CD8-positive, alpha-beta T cell (primary cell): ENCODE measurements at regions of chr16 and their contacts with region 1.

Region 1: GRCh38 chr16:66872943-66873684 is 7.2 kb upstream of the PDP2 start:
- DNase-seq: peak; percentile 68 to 96 (median 89)
- ATAC-seq: peak; percentile 84
- H3K4me3 ChIP-seq: peak overlapping the region; percentile 53 to 57
- H3K4me3 Mint-ChIP-seq: peak overlapping the region; percentile 74
- H3K27ac ChIP-seq: peak overlapping the region; percentile 11 to 68
- H3K27ac Mint-ChIP-seq: peak overlapping the region; percentile 34
- H3K4me1 ChIP-seq: peaks cover 9% of the 10 kb centered on the region
- H3K4me1 Mint-ChIP-seq: peaks cover 25% of the 10 kb centered on the region
- H3K27me3 ChIP-seq: no peaks in the 10 kb centered on the region
- H3K27me3 Mint-ChIP-seq: no peaks in the 10 kb centered on the region
- CTCF ChIP-seq: peak; percentile 92

Region 2: GRCh38 chr16:66562407-66562806 is 310.7 kb before region 1 on chr16:
- CTCF ChIA-PET with region 1: interaction called, 10 read pairs
- POLR2A ChIA-PET with region 1: no interaction called
- intact Hi-C with region 1: loop called in 1 of 2 experiments (anchors 2 kb)
- DNase-seq: peak in 2 of 9 experiments; percentile 34 to 56
- ATAC-seq: peak; percentile 64
- H3K4me3 ChIP-seq: no peak overlapping the region
- H3K4me3 Mint-ChIP-seq: no peak overlapping the region
- H3K27ac ChIP-seq: peak overlapping the region in 1 of 2 experiments; percentile 58
- H3K27ac Mint-ChIP-seq: peak overlapping the region; percentile 49
- H3K4me1 ChIP-seq: peaks cover 9% of the 10 kb centered on the region
- H3K4me1 Mint-ChIP-seq: peaks cover 60% of the 10 kb centered on the region
- H3K27me3 ChIP-seq: no peaks in the 10 kb centered on the region
- H3K27me3 Mint-ChIP-seq: no peaks in the 10 kb centered on the region
- CTCF ChIP-seq: peak; percentile 61

Region 3: DNA sequence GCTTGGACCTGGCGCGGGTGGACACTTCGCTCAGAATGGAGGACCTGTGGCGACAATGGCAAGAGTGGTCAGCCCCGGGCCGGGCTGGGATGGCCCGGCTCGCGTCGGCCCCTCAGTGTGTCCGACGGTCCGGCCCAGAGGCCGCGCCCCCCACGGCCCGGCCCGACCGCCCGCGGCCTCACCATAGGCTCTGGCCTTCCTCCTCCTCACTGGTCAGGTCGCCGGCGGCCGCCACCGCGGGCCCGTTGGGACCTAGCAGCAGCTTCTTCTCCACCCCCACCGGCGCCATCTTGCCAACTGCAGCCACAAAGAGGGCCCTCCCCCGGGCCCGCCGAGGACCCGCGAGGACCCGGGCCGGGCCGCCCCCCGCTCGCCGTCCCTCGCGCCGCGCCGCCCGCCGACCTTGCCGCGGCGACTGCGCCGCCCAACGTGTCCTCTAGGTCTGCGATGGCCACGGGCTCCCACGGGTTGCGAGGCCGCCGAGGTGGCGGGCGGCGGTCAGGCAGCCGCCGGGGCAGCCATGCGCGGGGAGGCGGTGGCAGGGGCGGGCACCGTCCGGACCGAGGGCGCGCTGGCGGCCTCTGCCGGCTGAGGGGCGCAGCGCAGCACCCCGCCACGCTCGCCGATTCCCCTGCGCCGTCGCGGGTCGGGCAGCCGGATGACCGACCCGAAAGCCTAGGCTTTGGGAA is 121.7 kb before region 1 on chr16 and contains the start of gene DYNC1LI2:
- CTCF ChIA-PET with region 1: interaction called, 4 read pairs
- POLR2A ChIA-PET with region 1: no interaction called
- intact Hi-C with region 1: loop called in 1 of 2 experiments (anchors 10 kb)
- DNase-seq: peak; percentile 63 to 90 (median 78)
- ATAC-seq: peak; percentile 96
- H3K4me3 ChIP-seq: peak within 1 kb of the TSS; percentile 70 to 90
- H3K4me3 Mint-ChIP-seq: peak within 1 kb of the TSS; percentile 87
- H3K27ac ChIP-seq: peak within 1 kb of the TSS; percentile 67 to 79
- H3K27ac Mint-ChIP-seq: peak within 1 kb of the TSS; percentile 94
- H3K4me1 ChIP-seq: peaks cover 32% of the 10 kb centered on the region
- H3K4me1 Mint-ChIP-seq: peaks cover 43% of the 10 kb centered on the region
- H3K27me3 ChIP-seq: no peaks in the 10 kb centered on the region
- H3K27me3 Mint-ChIP-seq: peaks cover 11% of the 10 kb centered on the region
- CTCF ChIP-seq: peak; percentile 76
- total RNA-seq, gene DYNC1LI2: 102 to 114 TPM

Region 4: GRCh38 chr16:66844342-66845079 is 28.6 kb before region 1 on chr16 and contains the start of gene CA7:
- CTCF ChIA-PET with region 1: interaction called, 20 read pairs
- POLR2A ChIA-PET with region 1: no interaction called
- intact Hi-C with region 1: no loop called
- DNase-seq: no peak
- ATAC-seq: peak; percentile 46
- H3K4me3 ChIP-seq: no peak within 1 kb of the TSS
- H3K4me3 Mint-ChIP-seq: peak within 1 kb of the TSS; percentile 68
- H3K27ac ChIP-seq: no peak within 1 kb of the TSS
- H3K27ac Mint-ChIP-seq: no peak within 1 kb of the TSS
- H3K4me1 ChIP-seq: peaks cover 4% of the 10 kb centered on the region
- H3K4me1 Mint-ChIP-seq: peaks cover 13% of the 10 kb centered on the region
- H3K27me3 ChIP-seq: peaks cover 0 to 7% of the 10 kb centered on the region in 2 experiments
- H3K27me3 Mint-ChIP-seq: peaks cover 34% of the 10 kb centered on the region
- CTCF ChIP-seq: no peak
- total RNA-seq, gene CA7: not detected

Region 5: GRCh38 chr16:66858740-66859396 is 14.2 kb before region 1 on chr16:
- CTCF ChIA-PET with region 1: interaction called, 12 read pairs
- POLR2A ChIA-PET with region 1: no interaction called
- intact Hi-C with region 1: no loop called
- DNase-seq: no peak
- ATAC-seq: no peak
- H3K4me3 ChIP-seq: no peak overlapping the region
- H3K4me3 Mint-ChIP-seq: no peak overlapping the region
- H3K27ac ChIP-seq: no peak overlapping the region
- H3K27ac Mint-ChIP-seq: no peak overlapping the region
- H3K4me1 ChIP-seq: no peaks in the 10 kb centered on the region
- H3K4me1 Mint-ChIP-seq: no peaks in the 10 kb centered on the region
- H3K27me3 ChIP-seq: no peaks in the 10 kb centered on the region
- H3K27me3 Mint-ChIP-seq: no peaks in the 10 kb centered on the region
- CTCF ChIP-seq: no peak

Region 6: GRCh38 chr16:66911112-66911511 is 38.0 kb after region 1 on chr16:
- CTCF ChIA-PET with region 1: no interaction called
- POLR2A ChIA-PET with region 1: no interaction called
- intact Hi-C with region 1: no loop called
- DNase-seq: no peak
- ATAC-seq: no peak
- H3K4me3 ChIP-seq: no peak overlapping the region
- H3K4me3 Mint-ChIP-seq: no peak overlapping the region
- H3K27ac ChIP-seq: no peak overlapping the region
- H3K27ac Mint-ChIP-seq: no peak overlapping the region
- H3K4me1 ChIP-seq: no peaks in the 10 kb centered on the region
- H3K4me1 Mint-ChIP-seq: peaks cover 3% of the 10 kb centered on the region
- H3K27me3 ChIP-seq: no peaks in the 10 kb centered on the region
- H3K27me3 Mint-ChIP-seq: no peaks in the 10 kb centered on the region
- CTCF ChIP-seq: no peak

Region 7: DNA sequence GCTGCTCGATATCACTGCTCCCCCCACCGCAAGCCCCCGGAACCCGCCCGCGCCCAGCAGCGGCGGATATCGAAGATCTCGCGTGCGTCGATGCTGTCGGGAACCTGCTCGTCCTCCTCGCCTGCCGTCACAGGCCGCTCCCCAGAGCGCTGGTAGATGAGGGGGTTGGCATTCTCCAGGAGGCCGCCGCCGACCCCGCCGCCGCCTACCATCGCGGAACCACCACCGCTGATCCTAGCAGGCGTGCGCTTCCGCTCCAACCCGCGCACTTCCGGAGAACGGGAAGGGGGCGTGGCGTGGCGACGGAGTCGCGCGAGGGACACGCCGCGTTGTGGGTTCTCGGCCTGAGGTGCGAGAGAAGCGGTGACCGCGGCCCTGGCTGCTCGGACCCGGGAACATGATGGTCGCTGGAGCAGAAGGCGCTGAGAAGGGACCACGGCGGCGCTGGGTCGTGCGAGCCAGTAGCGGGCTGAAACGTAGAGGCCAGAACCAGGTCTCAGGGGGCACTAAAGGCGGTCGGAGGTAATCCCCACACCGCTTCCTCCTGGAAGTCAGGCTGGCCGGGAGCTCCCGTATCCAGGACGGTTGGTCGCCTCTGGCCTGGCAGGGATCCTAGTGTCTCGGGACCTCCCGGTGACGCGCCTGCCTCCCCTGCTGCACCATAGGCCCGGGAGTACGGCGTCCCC is 61.2 kb after region 1 on chr16 and contains the start of gene CIAO2B:
- CTCF ChIA-PET with region 1: no interaction called
- POLR2A ChIA-PET with region 1: interaction called, 4 read pairs
- intact Hi-C with region 1: loop called in 1 of 2 experiments (anchors 1 kb)
- DNase-seq: peak; percentile 80 to 94 (median 90)
- ATAC-seq: peak; percentile 92
- H3K4me3 ChIP-seq: peak within 1 kb of the TSS; percentile 90 to 98
- H3K4me3 Mint-ChIP-seq: peak within 1 kb of the TSS; percentile 97
- H3K27ac ChIP-seq: peak within 1 kb of the TSS; percentile 94
- H3K27ac Mint-ChIP-seq: peak within 1 kb of the TSS; percentile 98
- H3K4me1 ChIP-seq: peaks cover 36% of the 10 kb centered on the region
- H3K4me1 Mint-ChIP-seq: peaks cover 57% of the 10 kb centered on the region
- H3K27me3 ChIP-seq: no peaks in the 10 kb centered on the region
- H3K27me3 Mint-ChIP-seq: no peaks in the 10 kb centered on the region
- CTCF ChIP-seq: no peak
- total RNA-seq, gene CIAO2B: 55.0 to 58.2 TPM

Region 8: DNA sequence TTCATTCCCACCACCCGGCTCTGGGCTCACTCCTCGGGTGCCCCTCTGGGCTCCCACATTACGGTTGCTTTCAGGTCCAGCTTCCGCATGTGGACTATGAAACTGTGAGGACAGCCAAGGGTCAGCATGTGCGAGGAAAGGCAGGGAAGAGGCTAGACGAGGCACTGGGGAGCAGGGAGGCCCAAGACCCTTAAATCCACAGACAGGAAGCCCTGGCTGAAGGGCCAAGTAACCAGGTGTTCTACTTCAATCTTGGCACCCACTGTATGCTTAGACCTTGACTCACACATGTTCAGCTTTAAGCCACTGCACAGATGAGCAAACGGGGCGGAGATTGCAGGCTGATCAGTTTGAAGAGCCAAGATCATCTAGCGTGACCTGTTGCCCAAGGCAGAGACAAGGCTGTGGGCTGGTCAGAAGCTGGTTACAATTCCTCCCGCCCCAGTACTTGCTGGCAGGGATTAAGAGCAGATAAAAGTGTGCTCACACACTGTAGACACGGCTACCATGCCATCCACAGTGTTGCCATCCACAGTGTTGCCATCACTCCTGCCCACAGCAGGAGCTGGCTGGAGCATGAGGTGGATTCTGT is 115.2 kb after region 1 on chr16 and contains the start of gene CES4A:
- CTCF ChIA-PET with region 1: no interaction called
- POLR2A ChIA-PET with region 1: no interaction called
- intact Hi-C with region 1: no loop called
- DNase-seq: no peak
- ATAC-seq: no peak
- H3K4me3 ChIP-seq: no peak within 1 kb of the TSS
- H3K4me3 Mint-ChIP-seq: no peak within 1 kb of the TSS
- H3K27ac ChIP-seq: no peak within 1 kb of the TSS
- H3K27ac Mint-ChIP-seq: no peak within 1 kb of the TSS
- H3K4me1 ChIP-seq: peaks cover 15% of the 10 kb centered on the region
- H3K4me1 Mint-ChIP-seq: peaks cover 9% of the 10 kb centered on the region
- H3K27me3 ChIP-seq: no peaks in the 10 kb centered on the region
- H3K27me3 Mint-ChIP-seq: no peaks in the 10 kb centered on the region
- CTCF ChIP-seq: no peak
- total RNA-seq, gene CES4A: 5.6 TPM